ENCODE measurements at regions of chr12 and their contacts with region 1.

Region 1: DNA sequence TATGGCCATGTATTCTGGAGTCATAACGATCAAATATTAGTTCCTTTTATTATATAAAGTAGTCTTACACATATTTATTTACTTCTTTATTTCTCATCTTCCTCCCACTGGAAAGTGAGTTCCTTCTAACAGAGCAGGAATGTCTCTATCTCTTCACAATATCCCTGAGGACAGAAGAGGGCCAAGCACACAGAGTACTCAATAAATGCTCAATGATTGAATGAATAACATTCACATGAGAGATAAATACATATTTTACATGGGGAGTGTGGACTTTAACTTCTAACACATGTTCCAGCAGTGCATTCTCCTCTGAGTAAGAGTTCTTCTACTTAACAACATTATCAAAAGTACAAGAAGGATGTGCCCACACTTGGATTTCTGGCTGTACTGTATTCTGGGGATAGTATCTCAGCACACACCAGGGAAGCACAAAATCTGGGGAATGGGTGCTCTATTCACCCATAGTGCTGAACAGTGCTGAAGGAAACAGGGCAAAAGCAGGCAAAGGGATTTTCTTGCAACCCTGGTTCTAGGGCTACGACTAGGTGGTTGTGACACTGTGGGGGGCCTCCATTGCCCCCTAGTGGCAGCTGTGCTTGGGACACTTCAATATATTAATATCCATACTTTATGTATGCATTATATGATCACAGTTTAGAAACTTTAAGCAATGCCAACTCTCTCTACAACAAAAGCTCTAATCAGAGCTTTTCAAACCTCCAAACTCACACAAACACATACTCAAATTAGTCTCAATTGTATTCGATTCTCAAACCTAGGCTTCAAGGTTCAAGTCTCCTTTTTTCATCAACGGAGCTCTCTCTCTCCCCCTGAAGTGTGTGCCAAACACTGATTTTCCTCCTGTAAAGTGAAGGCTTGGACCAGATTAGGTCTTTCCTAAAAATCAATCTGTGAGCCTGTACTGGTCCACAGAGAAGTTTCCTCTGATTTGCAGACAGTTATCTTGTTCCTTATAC is 115.5 kb downstream of the SLC2A13 start:
- DNase-seq: peak; percentile 35 to 40
- ATAC-seq: peak in 7 of 8 donors; percentile 26 to 69 (median 56)
- H3K4me3 ChIP-seq: no peak overlapping the region
- H3K27ac ChIP-seq: no peak overlapping the region
- H3K4me1 ChIP-seq: peaks cover 0 to 6% (median 0%) of the 10 kb centered on the region in 9 donors
- H3K27me3 ChIP-seq: no peaks in the 10 kb centered on the region
- CTCF ChIP-seq: peak; percentile 63 to 85 (median 76)

Region 2: DNA sequence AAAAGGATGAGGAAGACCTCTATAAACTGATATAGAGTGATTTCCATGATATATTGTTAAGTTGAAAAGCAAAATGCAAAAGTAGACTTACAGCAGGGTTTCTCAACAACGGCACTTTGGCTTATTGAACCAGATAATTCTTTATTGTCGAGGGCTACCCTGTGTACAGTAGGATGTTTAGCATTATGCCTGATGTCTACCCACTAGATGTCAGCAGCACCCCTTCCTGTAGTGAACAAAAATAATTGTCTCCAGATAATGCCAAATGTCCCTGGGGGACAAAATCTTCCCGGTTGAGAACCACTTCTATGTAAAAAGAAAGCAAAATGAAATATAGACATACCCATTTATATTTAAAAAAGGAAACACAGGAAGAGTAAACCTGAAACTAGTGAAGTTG is 403.2 kb before region 1 on chr12:
- intact Hi-C with region 1: loop called in 1 of 10 experiments (anchors 5 kb)
- DNase-seq: peak in 1 of 2 donors; percentile 13
- ATAC-seq: peak in 5 of 8 donors; percentile 67 to 76 (median 72)
- H3K4me3 ChIP-seq: no peak overlapping the region
- H3K27ac ChIP-seq: no peak overlapping the region
- H3K4me1 ChIP-seq: peaks cover 0 to 8% (median 0%) of the 10 kb centered on the region in 9 donors
- H3K27me3 ChIP-seq: no peaks in the 10 kb centered on the region
- CTCF ChIP-seq: peak in 7 of 9 donors; percentile 34 to 66 (median 45)

Region 3: DNA sequence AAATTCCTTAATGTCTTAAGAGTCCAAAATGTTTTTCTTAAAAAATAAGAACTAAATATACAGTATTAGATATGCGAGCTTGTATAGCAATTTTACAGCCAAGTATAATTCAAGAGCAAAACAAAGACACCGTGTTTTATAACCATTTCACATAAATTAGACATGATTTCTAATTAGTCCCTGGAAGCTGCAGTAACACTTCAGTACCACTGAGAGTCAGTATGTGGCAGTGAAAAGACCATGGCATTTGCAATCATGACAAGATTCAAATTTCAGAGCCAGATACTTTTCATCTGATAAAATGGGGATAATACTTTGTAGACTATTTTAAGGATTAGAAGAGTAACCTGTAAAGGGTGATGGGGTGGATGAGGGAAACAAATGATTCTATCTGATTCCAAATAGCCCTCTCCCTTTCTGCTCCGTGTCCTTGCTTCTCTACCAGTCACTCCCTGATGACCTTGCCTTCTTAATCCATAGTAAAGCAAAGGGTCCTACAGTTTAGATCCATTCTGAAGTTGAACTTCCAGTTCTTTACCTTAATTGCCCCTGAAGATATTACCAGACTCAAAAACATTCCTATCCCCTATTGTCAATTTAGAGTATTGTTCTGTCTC is 225.4 kb before region 1 on chr12:
- intact Hi-C with region 1: loop called in 9 of 10 experiments (anchors 1 to 10 kb)
- DNase-seq: no peak
- ATAC-seq: peak in 1 of 8 donors; percentile 46
- H3K4me3 ChIP-seq: no peak overlapping the region
- H3K27ac ChIP-seq: no peak overlapping the region
- H3K4me1 ChIP-seq: peaks cover 0 to 5% (median 0%) of the 10 kb centered on the region in 9 donors
- H3K27me3 ChIP-seq: no peaks in the 10 kb centered on the region
- CTCF ChIP-seq: peak; percentile 35 to 83 (median 71)

Region 4: GRCh38 chr12:39772708-39773665 is 217.4 kb before region 1 on chr12:
- intact Hi-C with region 1: loop called in 6 of 10 experiments (anchors 5 to 10 kb)
- DNase-seq: no peak
- ATAC-seq: peak in 1 of 8 donors; percentile 65
- H3K4me3 ChIP-seq: no peak overlapping the region
- H3K27ac ChIP-seq: no peak overlapping the region
- H3K4me1 ChIP-seq: no peaks in the 10 kb centered on the region
- H3K27me3 ChIP-seq: no peaks in the 10 kb centered on the region
- CTCF ChIP-seq: no peak